AG04450 (cell line): ENCODE measurements at regions of chr11 and their contacts with region 1.

Region 1: DNA sequence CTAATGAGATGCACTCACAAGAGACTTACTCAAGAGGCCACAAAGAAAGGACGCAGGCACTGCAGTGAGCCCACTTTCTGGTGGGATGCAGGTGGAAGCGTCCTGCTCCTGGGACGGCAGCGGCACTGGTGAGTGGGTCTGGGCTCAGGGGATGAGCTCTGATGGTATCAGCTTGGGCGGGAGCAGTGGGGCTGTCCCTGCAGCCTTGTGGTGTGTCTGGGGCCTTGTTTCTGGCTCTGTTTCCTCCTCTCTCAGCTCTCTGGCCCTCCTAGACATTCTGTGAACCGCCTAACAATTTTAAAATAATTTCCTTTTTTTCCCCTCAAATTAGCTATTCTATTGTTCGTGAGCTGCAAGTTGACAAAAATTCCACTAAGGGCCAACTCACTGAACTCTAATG is 8.8 kb upstream of the ST14 start:
- DNase-seq: no peak
- H3K4me3 ChIP-seq: no peak overlapping the region
- H3K27ac ChIP-seq: no peak overlapping the region
- H3K27me3 ChIP-seq: no peaks in the 10 kb centered on the region
- CTCF ChIP-seq: no peak

Region 2: GRCh38 chr11:129911298-129911697 is 239.5 kb before region 1 on chr11:
- CTCF ChIA-PET with region 1: interaction called, 13 read pairs
- POLR2A ChIA-PET with region 1: no interaction called
- DNase-seq: no peak
- H3K4me3 ChIP-seq: no peak overlapping the region
- H3K27ac ChIP-seq: no peak overlapping the region
- H3K27me3 ChIP-seq: no peaks in the 10 kb centered on the region
- CTCF ChIP-seq: no peak